Activated CD8-positive, alpha-beta T cell treated with anti-CD3 and anti-CD28 coated beads for 36 hours (primary cell): ENCODE measurements at regions of chr1 and their contacts with region 1.

Region 1: DNA sequence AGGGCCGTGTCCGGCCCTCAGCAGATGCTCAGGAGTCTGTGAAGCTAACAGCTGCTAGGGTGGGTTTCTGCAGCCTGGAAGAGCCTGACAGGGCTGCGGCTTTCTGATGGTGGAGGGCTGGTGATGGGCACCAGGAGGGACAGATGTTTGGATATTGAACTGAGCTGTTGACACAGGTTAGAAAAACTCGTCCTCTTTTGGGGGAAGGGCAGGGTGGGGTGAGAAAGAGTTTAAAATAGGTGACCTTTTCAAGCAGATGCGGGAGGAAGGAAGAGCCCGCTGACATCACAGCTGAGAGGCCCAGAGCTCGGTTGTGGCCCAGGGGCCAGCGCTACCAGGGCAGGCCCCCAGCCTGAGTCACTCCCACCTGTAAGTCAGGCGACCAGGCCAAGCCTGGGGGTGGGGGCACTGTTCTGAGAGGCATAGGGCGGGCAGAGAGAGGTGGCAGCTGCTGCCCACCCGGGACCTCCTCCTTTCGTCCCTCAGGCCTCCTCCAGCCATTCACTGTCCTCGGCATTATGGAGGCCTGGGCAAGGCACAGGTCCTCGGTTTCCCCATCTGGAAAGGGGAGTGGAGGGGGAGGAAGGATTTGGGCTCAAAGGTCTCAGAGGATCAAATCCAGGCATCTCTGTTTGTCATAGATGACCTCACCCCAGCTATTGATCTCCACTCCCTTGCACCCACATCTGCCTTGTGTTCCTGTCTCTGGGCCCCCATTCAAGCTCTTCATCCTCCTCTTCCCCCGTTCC is 32.3 kb upstream of the ID3 start:
- DNase-seq: peak; percentile 96
- ATAC-seq: peak; percentile 87
- H3K4me3 Mint-ChIP-seq: peak overlapping the region; percentile 21
- H3K27ac Mint-ChIP-seq: peak overlapping the region; percentile 90
- H3K4me1 Mint-ChIP-seq: peaks cover 79% of the 10 kb centered on the region
- H3K27me3 Mint-ChIP-seq: no peaks in the 10 kb centered on the region
- CTCF ChIP-seq: no peak

Region 2: DNA sequence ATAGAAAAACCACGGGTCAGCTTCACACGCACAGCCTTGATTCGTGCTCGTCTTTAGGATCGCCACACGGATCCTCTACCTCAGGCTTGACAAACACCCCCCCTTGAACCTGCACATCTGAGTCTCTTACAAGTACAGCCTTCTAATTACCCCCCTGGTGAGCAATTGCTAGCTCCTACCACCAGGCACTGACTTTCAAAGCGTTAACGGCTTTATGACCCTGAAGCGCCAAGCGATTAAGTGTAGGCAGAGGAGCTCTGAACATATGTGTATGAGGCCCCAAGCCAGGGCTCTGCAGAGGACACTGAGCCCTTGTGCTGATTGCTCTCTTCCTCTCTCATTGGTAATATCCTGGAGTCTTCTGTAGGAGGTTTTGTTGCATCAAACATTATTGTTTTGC is 1084.0 kb before region 1 on chr1:
- CTCF ChIA-PET with region 1: no interaction called
- POLR2A ChIA-PET with region 1: no interaction called
- intact Hi-C with region 1: no loop called
- DNase-seq: no peak
- ATAC-seq: no peak
- H3K4me3 Mint-ChIP-seq: no peak overlapping the region
- H3K27ac Mint-ChIP-seq: no peak overlapping the region
- H3K4me1 Mint-ChIP-seq: no peaks in the 10 kb centered on the region
- H3K27me3 Mint-ChIP-seq: no peaks in the 10 kb centered on the region
- CTCF ChIP-seq: no peak

Region 3: DNA sequence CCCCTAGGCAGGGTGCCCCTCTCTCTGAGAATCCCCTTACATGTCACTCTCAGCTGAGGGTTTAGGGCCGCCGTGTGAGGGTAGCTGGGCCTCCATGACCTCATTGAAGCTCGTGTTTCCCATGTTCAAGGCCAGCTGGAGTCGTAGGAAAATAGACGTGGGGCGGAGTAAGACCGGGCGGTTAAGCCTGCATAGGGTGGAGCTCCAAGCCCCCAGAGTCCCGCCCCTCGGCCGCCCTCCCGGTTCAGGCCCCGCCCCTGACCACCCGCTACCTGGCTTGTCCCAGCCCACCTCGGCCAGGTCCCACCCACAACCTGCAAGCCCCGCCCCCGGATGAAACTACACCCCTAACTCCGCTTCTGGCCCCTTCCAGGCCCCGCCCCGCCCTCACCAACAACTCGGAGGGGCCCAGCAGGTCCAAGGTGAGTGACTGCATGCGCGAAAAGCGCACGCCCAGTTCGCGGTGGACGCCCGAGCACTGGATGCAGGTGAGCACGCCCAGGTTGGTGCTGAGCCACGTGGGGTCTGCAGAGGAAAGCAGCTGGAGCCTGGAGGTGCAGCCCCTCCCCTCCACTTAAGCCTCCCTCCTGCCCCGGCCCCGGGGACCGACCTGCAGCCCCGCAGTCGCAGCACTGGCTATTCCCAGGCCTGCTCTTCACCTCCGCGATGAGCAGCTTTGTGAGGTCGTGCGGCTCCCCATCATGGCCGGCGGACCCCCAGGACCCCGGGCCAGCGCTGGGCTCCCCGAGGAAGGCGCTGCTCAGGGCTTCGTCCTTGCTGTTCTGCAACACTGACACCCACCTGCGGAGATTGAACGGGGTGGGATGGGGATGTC is 154.9 kb before region 1 on chr1:
- CTCF ChIA-PET with region 1: no interaction called
- POLR2A ChIA-PET with region 1: no interaction called
- intact Hi-C with region 1: no loop called
- DNase-seq: peak; percentile 60
- ATAC-seq: peak; percentile 86
- H3K4me3 Mint-ChIP-seq: no peak overlapping the region
- H3K27ac Mint-ChIP-seq: no peak overlapping the region
- H3K4me1 Mint-ChIP-seq: no peaks in the 10 kb centered on the region
- H3K27me3 Mint-ChIP-seq: peaks cover 1% of the 10 kb centered on the region
- CTCF ChIP-seq: no peak

Region 4: GRCh38 chr1:23577056-23578004 is 14.3 kb before region 1 on chr1:
- CTCF ChIA-PET with region 1: interaction called, 14 read pairs
- POLR2A ChIA-PET with region 1: interaction called, 26 read pairs
- intact Hi-C with region 1: loop called (anchors 2 kb)
- DNase-seq: peak; percentile 81
- ATAC-seq: peak; percentile 93
- H3K4me3 Mint-ChIP-seq: peak overlapping the region; percentile 40
- H3K27ac Mint-ChIP-seq: peak overlapping the region; percentile 85
- H3K4me1 Mint-ChIP-seq: peaks cover 59% of the 10 kb centered on the region
- H3K27me3 Mint-ChIP-seq: no peaks in the 10 kb centered on the region
- CTCF ChIP-seq: no peak

Region 5: GRCh38 chr1:23613191-23614031 is 21.8 kb after region 1 on chr1:
- CTCF ChIA-PET with region 1: interaction called, 15 read pairs
- POLR2A ChIA-PET with region 1: interaction called, 34 read pairs
- intact Hi-C with region 1: no loop called
- DNase-seq: peak; percentile 85
- ATAC-seq: peak; percentile 63
- H3K4me3 Mint-ChIP-seq: peak overlapping the region; percentile 28
- H3K27ac Mint-ChIP-seq: peak overlapping the region; percentile 89
- H3K4me1 Mint-ChIP-seq: peaks cover 69% of the 10 kb centered on the region
- H3K27me3 Mint-ChIP-seq: no peaks in the 10 kb centered on the region
- CTCF ChIP-seq: no peak

Region 6: DNA sequence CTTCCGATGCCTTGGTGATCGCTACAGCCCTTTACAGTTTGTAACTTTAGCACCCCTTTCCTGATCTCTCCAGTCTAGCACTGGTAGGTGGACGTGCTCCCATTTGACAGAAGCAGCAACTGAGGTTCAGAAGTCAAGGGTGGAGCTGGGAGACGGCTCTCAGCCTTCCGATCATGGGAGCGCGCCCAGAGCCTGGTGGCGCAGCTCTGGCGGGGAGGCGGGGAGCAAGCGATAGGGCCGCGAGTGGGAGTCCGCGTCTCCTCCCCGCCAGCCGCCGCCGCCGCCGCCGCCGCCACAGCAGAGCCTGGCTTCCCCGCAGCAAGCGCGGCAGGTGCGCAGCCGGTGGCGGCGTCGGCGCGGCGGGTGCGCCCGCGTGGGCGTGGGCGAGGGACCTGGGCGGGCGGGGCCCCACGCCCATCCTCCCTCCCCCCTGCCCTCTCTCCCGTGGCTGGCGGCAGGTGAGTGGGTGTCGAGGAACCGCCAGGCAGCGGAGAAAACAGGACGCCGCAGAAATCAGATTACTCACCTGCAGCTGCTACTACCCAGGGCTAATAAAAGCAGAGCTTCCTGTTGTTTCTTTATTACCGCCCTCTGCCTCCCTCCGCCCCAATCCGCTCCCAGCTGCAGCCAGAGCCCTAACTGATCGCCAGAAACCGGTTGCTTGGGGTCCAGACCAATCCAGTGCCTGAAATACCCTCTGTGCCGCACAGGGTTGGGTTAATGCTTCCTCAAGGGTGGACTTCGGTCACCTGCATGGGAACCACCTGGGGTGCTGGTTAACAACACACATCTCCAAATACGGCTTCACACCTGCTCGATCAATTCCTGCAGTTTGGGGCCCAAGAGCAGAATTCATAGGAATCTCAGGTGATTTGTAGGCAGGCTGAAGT is 27.9 kb after region 1 on chr1:
- CTCF ChIA-PET with region 1: interaction called, 15 read pairs
- POLR2A ChIA-PET with region 1: interaction called, 34 read pairs
- intact Hi-C with region 1: no loop called
- DNase-seq: peak; percentile 91
- ATAC-seq: peak; percentile 72
- H3K4me3 Mint-ChIP-seq: peak overlapping the region; percentile 68
- H3K27ac Mint-ChIP-seq: peak overlapping the region; percentile 82
- H3K4me1 Mint-ChIP-seq: peaks cover 81% of the 10 kb centered on the region
- H3K27me3 Mint-ChIP-seq: no peaks in the 10 kb centered on the region
- CTCF ChIP-seq: no peak

Region 7: DNA sequence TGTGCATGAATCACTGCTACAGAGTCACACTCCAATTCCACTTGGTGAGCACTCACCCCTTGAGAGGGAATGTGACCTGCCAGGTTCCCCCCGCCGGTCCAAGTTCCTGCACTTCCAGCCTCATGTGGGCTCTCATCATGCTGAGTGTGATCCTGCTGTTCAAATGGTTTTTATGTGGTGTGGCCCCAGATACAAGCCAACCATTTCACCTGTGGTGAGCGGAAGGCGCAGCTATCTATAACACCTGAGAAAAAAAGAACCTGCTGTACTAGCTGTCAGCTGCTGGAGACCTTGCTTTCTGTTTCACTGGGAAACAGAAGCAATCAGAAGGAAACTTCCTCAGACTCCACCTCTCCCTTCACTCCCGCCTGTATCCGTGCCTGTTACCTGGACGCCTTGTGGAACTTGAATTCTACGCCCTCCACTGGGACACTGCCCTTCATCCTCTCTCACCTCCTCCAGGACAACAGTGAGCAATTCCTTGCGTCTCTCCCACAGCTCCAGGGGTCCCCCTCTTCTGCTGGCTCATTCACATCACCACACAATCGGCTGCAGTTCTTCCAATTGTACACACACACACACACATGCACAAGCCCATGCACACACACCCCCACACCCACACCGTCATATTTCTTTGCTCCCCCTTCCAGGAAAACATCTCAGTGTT is 35.6 kb after region 1 on chr1:
- CTCF ChIA-PET with region 1: interaction called, 4 read pairs
- POLR2A ChIA-PET with region 1: interaction called, 4 read pairs
- intact Hi-C with region 1: loop called (anchors 5 kb)
- DNase-seq: peak; percentile 37
- ATAC-seq: peak; percentile 13
- H3K4me3 Mint-ChIP-seq: peak overlapping the region; percentile 64
- H3K27ac Mint-ChIP-seq: peak overlapping the region; percentile 58
- H3K4me1 Mint-ChIP-seq: peaks cover 60% of the 10 kb centered on the region
- H3K27me3 Mint-ChIP-seq: no peaks in the 10 kb centered on the region
- CTCF ChIP-seq: no peak